Dendritic cell treated with granulocyte-macrophage colony-stimulating factor and Interleukin-4, amounts not matched to agents 40 ng/mL and 50 ng/mL, for 4 days (primary cell): ENCODE measurements at regions of chr21 and their contacts with region 1.

Region 1: DNA sequence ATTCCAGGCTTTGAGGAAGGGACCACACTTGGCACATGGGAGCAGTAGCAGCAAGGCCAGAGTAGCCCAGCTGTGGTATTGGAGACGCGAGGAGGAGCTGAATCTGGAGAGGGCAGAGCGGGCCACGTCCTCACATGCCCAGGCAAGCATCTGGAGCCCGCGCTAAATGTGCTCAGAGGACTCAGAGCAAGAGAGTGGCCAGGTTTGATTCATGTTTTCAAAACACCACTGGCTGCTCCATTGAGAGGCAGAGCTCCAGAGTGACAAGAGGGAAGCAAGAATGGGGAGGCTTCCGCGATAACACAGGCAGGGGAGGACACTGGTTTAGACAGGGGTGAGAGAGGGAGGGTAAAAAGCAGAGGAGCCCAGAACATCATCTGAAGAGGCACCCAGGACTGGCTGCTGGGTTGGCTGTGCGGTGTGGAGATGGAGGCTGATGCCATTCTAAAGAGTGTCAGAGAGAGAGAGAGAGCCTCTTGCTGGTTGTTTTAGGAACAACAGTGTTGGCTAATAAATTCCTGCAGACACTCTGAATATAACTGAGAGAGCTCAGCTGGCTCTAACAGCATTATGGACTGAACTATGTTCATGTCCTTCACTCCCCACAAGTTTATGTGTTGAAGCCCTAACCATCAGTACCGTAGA is 32.3 kb downstream of the RCAN1 start:
- H3K4me3 Mint-ChIP-seq: no peak overlapping the region
- H3K27ac Mint-ChIP-seq: no peak overlapping the region
- H3K4me1 Mint-ChIP-seq: peaks cover 46% of the 10 kb centered on the region
- H3K27me3 Mint-ChIP-seq: no peaks in the 10 kb centered on the region

Region 2: DNA sequence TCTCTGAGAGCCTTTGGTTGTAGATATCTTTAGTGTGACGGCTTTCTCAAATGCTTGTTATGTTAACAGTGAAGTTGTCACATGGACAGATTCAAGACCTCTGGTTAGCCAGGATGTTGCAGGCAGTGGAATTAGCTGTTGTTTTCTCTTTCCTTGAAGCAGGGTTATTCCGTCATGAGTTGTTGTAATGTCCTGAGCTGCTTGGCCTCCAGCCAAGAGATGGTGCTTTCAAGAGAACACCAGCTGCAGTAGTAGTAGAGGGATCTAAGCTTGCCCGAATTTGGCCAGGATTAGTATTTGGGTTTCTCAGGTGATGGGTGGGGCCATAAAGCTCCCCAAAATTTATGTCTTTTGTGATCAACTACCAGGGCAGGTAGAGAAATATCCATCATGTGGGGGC is 84.0 kb before region 1 on chr21:
- intact Hi-C with region 1: no loop called
- H3K4me3 Mint-ChIP-seq: no peak overlapping the region
- H3K27ac Mint-ChIP-seq: no peak overlapping the region
- H3K4me1 Mint-ChIP-seq: no peaks in the 10 kb centered on the region
- H3K27me3 Mint-ChIP-seq: no peaks in the 10 kb centered on the region

Region 3: GRCh38 chr21:34510148-34511142 is 72.2 kb before region 1 on chr21:
- intact Hi-C with region 1: loop called (anchors 2 kb)
- H3K4me3 Mint-ChIP-seq: peak overlapping the region; percentile 77
- H3K27ac Mint-ChIP-seq: peak overlapping the region; percentile 64
- H3K4me1 Mint-ChIP-seq: peaks cover 58% of the 10 kb centered on the region
- H3K27me3 Mint-ChIP-seq: no peaks in the 10 kb centered on the region

Region 4: DNA sequence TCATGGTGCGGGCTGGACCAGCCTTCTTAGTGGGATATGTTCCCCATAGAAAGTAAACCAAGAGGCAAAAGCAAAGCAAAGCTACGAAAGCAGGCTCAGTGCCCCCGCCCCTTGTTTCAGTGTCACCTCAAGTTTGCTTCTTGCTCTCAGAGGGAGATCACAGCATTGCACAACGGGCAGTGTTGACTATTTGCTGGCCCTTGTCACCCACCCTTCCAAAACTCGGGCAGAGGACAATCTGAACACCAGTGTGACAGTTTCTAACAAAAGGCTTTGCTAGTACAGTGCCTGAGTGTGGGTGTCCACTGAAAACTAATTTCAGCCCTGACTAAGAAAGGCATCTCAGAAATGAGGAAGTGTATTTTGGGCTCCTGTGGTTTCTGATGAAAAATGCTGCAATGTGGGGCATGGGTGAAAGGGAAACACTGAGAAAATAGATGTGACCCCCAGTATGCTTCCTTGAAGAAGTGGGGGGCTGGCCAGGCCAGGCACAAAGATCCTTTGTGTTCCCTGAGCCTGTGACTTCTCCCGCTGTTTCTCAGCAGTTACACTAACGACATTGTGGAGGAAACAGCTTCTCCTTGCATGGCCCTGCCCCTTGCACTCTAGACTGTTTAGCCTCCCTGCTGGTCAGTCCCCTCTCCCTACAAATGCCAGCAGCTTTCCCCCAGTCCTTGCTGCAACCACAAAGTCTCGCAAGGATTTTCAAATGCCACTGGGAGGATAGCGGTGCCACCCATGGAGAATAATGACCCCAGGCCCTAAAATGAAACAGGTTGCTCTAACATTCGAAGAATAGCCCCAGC is 37.3 kb before region 1 on chr21:
- intact Hi-C with region 1: loop called (anchors 5 kb)
- H3K4me3 Mint-ChIP-seq: peak overlapping the region; percentile 53
- H3K27ac Mint-ChIP-seq: peak overlapping the region; percentile 88
- H3K4me1 Mint-ChIP-seq: peaks cover 61% of the 10 kb centered on the region
- H3K27me3 Mint-ChIP-seq: no peaks in the 10 kb centered on the region

Region 5: GRCh38 chr21:34570313-34570712 is 12.3 kb before region 1 on chr21:
- intact Hi-C with region 1: no loop called
- H3K4me3 Mint-ChIP-seq: no peak overlapping the region
- H3K27ac Mint-ChIP-seq: no peak overlapping the region
- H3K4me1 Mint-ChIP-seq: peaks cover 24% of the 10 kb centered on the region
- H3K27me3 Mint-ChIP-seq: no peaks in the 10 kb centered on the region

Region 6: DNA sequence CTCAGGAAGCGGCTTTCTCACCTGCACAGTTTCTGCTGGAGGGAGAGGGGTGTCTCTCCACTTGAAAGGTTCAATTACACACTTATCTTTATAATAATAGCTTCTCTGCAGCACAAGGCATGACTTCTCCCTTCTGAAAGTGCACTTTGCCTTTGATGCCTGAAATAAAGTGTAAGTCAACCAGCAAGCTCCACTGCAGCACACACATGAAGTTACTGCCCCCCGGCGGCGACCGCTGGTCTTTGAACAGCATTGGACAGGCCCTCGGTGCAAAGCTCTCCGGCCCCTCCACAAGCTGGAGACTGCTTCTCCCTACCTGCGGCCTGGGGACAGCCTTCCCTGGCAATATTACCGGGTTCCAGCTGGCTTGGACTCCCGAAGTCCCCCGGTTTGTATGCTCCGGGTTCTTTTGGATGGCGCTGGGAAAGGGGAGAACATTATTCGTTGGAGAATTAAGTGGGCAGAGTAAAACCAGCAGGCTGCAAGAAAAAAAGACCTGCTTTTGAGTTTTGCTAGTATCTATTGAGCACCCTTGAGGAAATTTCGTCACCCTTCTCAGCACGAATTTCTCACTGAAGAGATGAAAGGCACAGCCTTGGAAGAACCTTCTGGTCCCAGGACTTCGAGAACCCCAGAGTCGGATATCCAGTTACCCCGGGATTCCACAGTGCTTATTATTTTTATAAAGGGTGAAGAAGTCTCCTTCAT is 20.5 kb after region 1 on chr21:
- intact Hi-C with region 1: no loop called
- H3K4me3 Mint-ChIP-seq: no peak overlapping the region
- H3K27ac Mint-ChIP-seq: no peak overlapping the region
- H3K4me1 Mint-ChIP-seq: peaks cover 12% of the 10 kb centered on the region
- H3K27me3 Mint-ChIP-seq: no peaks in the 10 kb centered on the region

Region 7: DNA sequence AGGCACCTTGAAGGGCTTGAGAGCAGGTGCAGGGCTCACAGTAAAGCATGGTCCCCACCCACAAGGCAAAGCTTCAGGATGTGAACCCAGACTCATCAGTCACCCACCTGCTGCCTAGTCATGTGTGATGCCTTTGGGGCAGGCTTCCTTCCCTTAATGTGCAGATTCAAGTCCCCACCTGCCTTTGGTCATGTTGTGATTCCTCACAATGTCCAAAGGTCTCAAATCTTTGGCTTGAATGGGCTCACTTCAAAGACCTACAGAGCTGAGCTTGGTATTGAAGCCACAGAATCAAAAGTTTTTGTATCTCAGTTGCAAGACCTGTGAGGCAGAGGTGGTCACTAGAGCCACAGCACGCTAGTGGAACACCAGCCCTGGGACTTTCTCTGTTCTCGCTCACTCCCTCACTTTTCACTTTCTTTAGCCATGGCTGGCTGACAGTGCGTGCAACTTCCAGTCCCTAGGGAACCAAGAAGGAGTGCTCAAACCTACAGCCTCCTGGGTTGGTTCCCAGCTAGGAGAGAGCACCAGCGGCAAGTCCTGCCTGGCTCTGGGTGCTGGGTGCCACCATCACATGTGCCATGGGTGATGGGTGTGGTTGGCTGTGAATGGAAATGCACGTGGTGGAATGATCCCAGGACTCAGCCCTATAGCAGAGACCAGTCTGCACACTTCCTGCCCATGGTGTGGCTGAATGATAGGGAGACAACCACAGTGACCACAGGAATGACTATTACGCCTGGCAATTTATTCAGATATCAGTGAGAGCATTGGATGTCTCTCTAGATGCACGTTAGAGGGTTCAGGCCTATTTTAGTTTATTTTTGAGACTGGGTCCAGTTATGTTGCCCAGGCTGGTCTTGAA is 59.8 kb after region 1 on chr21:
- intact Hi-C with region 1: no loop called
- H3K4me3 Mint-ChIP-seq: no peak overlapping the region
- H3K27ac Mint-ChIP-seq: no peak overlapping the region
- H3K4me1 Mint-ChIP-seq: peaks cover 28% of the 10 kb centered on the region
- H3K27me3 Mint-ChIP-seq: peaks cover 2% of the 10 kb centered on the region